Activated CD8-positive, alpha-beta T cell treated with anti-CD3 and anti-CD28 coated beads for 36 hours (primary cell): ENCODE measurements at regions of chr16 and their contacts with region 1.

Region 1: GRCh38 chr16:68590201-68590994 is 51.3 kb downstream of the ZFP90 start:
- DNase-seq: peak; percentile 83
- ATAC-seq: peak; percentile 95
- H3K4me3 Mint-ChIP-seq: peak overlapping the region; percentile 10
- H3K27ac Mint-ChIP-seq: no peak overlapping the region
- H3K4me1 Mint-ChIP-seq: peaks cover 2% of the 10 kb centered on the region
- H3K27me3 Mint-ChIP-seq: no peaks in the 10 kb centered on the region
- CTCF ChIP-seq: peak; percentile 84

Region 2: DNA sequence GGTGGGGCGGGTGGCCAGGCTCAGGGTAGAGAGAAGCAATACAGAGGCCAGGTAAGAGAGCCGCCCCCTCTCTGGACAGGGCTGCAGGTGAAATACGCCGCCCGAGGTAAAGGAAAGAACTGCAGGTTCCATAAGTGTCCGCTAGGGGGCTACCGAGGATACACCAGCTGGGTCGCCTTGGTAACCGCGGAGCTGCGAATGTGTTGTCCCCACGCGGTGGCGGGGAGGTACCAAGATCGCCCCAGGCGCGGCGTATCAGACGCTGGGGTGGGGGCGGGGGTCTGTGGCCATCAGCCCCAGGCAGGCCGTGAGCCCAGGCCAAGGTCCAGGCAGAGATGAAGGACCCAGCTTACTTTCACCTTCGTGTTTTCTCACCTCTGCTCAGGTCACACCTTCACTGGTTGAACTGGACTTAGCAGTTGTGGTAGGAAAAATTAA is 69.7 kb before region 1 on chr16:
- CTCF ChIA-PET with region 1: interaction called, 97 read pairs
- POLR2A ChIA-PET with region 1: no interaction called
- intact Hi-C with region 1: no loop called
- DNase-seq: peak; percentile 95
- ATAC-seq: peak; percentile 99
- H3K4me3 Mint-ChIP-seq: peak overlapping the region; percentile 21
- H3K27ac Mint-ChIP-seq: no peak overlapping the region
- H3K4me1 Mint-ChIP-seq: peaks cover 8% of the 10 kb centered on the region
- H3K27me3 Mint-ChIP-seq: peaks cover 1% of the 10 kb centered on the region
- CTCF ChIP-seq: peak; percentile 99

Region 3: GRCh38 chr16:68538880-68539701 is 51.3 kb before region 1 on chr16 and contains the start of gene ZFP90:
- CTCF ChIA-PET with region 1: interaction called, 18 read pairs
- POLR2A ChIA-PET with region 1: no interaction called
- intact Hi-C with region 1: no loop called
- DNase-seq: peak; percentile 91
- ATAC-seq: peak; percentile 95
- H3K4me3 Mint-ChIP-seq: peak within 1 kb of the TSS; percentile 94
- H3K27ac Mint-ChIP-seq: peak within 1 kb of the TSS; percentile 95
- H3K4me1 Mint-ChIP-seq: peaks cover 12% of the 10 kb centered on the region
- H3K27me3 Mint-ChIP-seq: no peaks in the 10 kb centered on the region
- CTCF ChIP-seq: no peak
- total RNA-seq, gene ZFP90: 27.6 to 32.6 TPM

Region 4: GRCh38 chr16:68577352-68577853 is 13.0 kb before region 1 on chr16:
- CTCF ChIA-PET with region 1: interaction called, 33 read pairs
- POLR2A ChIA-PET with region 1: no interaction called
- intact Hi-C with region 1: no loop called
- DNase-seq: no peak
- ATAC-seq: no peak
- H3K4me3 Mint-ChIP-seq: no peak overlapping the region
- H3K27ac Mint-ChIP-seq: no peak overlapping the region
- H3K4me1 Mint-ChIP-seq: no peaks in the 10 kb centered on the region
- H3K27me3 Mint-ChIP-seq: no peaks in the 10 kb centered on the region
- CTCF ChIP-seq: no peak

Region 5: GRCh38 chr16:68800257-68800875 is 210.0 kb after region 1 on chr16:
- CTCF ChIA-PET with region 1: interaction called, 19 read pairs
- POLR2A ChIA-PET with region 1: no interaction called
- intact Hi-C with region 1: no loop called
- DNase-seq: peak; percentile 70
- ATAC-seq: peak; percentile 92
- H3K4me3 Mint-ChIP-seq: no peak overlapping the region
- H3K27ac Mint-ChIP-seq: no peak overlapping the region
- H3K4me1 Mint-ChIP-seq: peaks cover 2% of the 10 kb centered on the region
- H3K27me3 Mint-ChIP-seq: no peaks in the 10 kb centered on the region
- CTCF ChIP-seq: peak; percentile 62